SK-N-SH (cell line): ENCODE measurements at regions of chr5 and their contacts with region 1.

Region 1: GRCh38 chr5:8184455-8185063 is 315.6 kb downstream of the MTRR start:
- DNase-seq: peak; percentile 51
- H3K4me3 ChIP-seq: no peak overlapping the region; a peak in 1 of 4 replicates
- H3K27ac ChIP-seq: no peak overlapping the region
- H3K4me1 ChIP-seq: no peaks in the 10 kb centered on the region
- H3K27me3 ChIP-seq: no peaks in the 10 kb centered on the region
- CTCF ChIP-seq: peak; percentile 90
- EP300 ChIP-seq: no peak
- RAD21 ChIP-seq: peak; percentile 42

Region 2: GRCh38 chr5:8196061-8196460 is 11.5 kb after region 1 on chr5:
- CTCF ChIA-PET with region 1: interaction called, 13 read pairs
- POLR2A ChIA-PET with region 1: no interaction called
- DNase-seq: no peak
- H3K4me3 ChIP-seq: no peak overlapping the region
- H3K27ac ChIP-seq: no peak overlapping the region
- H3K4me1 ChIP-seq: no peaks in the 10 kb centered on the region
- H3K27me3 ChIP-seq: no peaks in the 10 kb centered on the region
- CTCF ChIP-seq: no peak
- EP300 ChIP-seq: no peak
- RAD21 ChIP-seq: no peak